Vagina (tissue), 2 donors: ENCODE measurements at regions of chr1 and their contacts with region 1.

Region 1: DNA sequence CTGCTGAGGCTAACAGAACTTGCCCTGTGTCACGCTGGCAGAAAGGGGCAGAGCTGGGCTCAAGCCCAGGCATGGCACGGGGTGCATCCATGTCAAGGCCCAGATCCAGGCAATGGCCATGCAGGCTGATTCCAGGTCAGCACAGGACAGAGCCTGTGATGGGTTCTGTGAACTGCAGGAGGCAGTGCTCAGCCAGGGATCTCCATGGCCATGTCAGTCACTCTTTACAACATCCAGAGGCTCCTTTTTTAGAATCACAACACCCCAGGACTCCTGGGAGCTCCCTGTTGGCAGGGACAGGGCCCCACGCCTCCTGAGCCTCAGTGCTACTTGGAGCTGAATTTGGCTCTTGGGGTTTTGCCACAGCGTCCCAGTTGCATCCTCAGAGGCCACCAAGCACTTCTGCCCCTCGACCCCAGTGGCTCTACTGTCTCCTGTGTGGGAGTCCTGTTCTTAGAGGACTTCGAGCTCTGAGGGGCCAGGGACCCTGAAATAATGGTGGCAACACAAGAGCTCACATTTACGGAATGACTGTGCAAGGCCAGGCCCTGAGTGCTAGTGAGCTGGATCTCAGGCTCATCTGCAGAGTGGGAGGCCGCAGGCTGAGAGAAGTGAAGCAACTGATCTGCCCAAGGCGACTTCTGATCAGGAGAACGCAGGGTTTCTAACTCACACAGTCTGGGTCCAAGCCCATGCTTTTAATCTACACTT is 211.5 kb downstream of the TRABD2B start:
- DNase-seq: no peak
- H3K4me3 ChIP-seq: no peak overlapping the region
- H3K27ac ChIP-seq: no peak overlapping the region
- H3K4me1 ChIP-seq: peaks cover 20% of the 10 kb centered on the region
- H3K27me3 ChIP-seq: no peaks in the 10 kb centered on the region
- CTCF ChIP-seq: peak in 2 of 3 experiments; percentile 18 to 22
- POLR2A ChIP-seq: no peak

Region 2: DNA sequence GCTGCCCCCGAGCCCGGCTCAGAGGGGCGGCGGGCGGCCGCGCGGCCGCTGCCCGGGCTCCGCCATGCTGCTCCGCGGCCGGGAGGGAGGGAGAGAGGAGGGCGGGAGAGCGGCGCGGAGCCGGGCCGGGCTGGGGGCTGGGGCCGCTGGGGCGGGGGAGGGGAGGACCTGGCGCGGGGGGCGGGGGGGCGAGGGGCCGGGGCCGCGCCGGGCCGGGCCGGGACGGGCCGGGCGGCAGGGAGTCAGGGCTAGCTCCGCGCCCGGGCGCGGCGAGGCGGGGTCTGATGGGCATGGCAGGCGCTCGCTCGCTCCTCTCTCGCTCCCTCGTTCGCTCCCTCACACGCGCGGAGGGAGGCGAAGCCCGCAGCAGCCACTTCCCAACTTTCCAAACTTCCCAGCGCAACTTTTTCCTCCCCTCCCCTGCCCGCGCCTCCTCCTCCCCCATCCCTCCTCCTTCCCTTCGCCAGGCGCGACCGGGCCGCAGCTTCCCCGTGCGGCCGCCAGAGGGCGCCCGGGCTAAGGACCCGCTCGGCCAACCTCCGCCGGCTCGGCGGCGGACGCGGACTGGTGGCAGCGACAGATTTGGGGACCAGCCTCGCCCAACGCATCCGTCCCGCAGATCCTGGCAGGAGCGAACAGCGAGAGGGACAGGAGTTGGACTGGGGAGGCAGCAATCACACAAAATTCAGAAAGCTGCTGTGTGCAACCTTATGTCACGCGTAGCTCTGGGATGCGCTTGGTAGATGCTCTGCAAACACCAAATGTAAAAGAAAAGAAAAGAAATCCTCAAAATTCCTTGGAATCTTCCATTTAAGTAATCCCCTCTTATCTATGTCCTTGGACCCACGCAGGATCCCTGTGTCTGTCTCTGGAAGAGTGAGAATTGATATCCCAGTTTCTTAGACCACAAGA is 211.8 kb after region 1 on chr1 and contains the start of gene TRABD2B:
- intact Hi-C with region 1: loop called (anchors 5 kb)
- DNase-seq: peak; percentile 70 to 90
- H3K4me3 ChIP-seq: peak within 1 kb of the TSS; percentile 72 to 78
- H3K27ac ChIP-seq: peak within 1 kb of the TSS; percentile 87
- H3K4me1 ChIP-seq: peaks cover 33% of the 10 kb centered on the region
- H3K27me3 ChIP-seq: no peaks in the 10 kb centered on the region
- CTCF ChIP-seq: peak; percentile 80 to 94 (median 82)
- POLR2A ChIP-seq: no peak
- total RNA-seq, gene TRABD2B: 5.6 TPM

Region 3: GRCh38 chr1:48055876-48056764 is 270.4 kb after region 1 on chr1:
- intact Hi-C with region 1: loop called (anchors 10 kb)
- DNase-seq: no peak
- H3K4me3 ChIP-seq: no peak overlapping the region
- H3K27ac ChIP-seq: no peak overlapping the region
- H3K4me1 ChIP-seq: peaks cover 14% of the 10 kb centered on the region
- H3K27me3 ChIP-seq: no peaks in the 10 kb centered on the region
- CTCF ChIP-seq: no peak
- POLR2A ChIP-seq: no peak